ENCODE measurements at regions of chr10 and their contacts with region 1.

Region 1: DNA sequence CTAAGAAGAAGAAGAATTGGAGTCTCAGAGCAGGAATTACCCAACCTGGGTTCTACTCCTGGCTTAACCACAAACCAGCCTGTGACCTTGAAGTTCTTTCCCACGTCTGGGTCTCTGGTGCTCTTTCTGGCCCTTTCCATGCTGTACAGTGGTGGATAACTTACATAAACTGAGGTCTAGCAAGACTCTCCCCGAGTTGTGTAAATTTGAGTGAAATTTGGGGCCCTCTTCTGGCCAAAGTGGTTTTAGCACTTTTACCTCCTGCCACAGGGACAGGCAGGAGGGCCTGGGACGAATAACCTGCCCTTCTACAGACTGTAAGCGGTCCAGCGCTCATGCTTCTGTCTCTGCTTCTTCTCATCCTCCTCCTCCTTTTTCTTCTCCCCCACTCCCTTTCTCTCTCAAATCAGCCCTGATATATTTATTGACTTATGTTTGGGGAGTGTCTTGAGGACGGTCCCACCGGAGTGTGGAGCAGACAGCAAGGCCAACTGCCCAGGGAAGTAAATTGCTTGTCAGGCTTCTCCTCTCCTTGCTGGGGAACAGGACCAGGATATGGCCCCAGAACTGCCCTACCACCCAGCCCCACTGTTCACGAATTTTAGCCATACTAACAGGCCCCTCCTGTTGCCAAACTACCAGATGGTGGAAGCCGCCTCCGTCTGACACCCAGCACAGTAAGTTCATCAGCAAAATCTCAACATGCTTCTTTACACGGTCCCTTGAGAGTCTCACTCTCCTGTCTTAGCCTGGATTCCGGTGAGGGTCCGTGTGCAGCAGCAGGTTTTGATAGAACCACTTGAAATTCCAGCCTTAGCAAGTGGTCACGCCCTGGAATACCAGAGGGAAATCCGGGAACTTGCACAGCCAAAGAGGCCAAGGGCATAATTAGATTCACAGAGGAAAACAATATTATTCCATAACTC is 4.0 kb upstream of the SH3PXD2A start:
- DNase-seq: peak in 4 of 5 donors; percentile 56 to 79 (median 62)
- H3K4me3 ChIP-seq: no peak overlapping the region
- H3K27ac ChIP-seq: no peak overlapping the region
- H3K4me1 ChIP-seq: no peaks in the 10 kb centered on the region
- H3K27me3 ChIP-seq: no peaks in the 10 kb centered on the region
- CTCF ChIP-seq: peak; percentile 57 to 78 (median 77)
- EP300 ChIP-seq: no peak
- POLR2A ChIP-seq: peak; percentile 14

Region 2: GRCh38 chr10:103712570-103713498 is 146.6 kb before region 1 on chr10:
- intact Hi-C with region 1: loop called (anchors 2 kb)
- DNase-seq: peak; percentile 74 to 91 (median 87)
- H3K4me3 ChIP-seq: no peak overlapping the region
- H3K27ac ChIP-seq: no peak overlapping the region
- H3K4me1 ChIP-seq: peaks cover 1% of the 10 kb centered on the region
- H3K27me3 ChIP-seq: no peaks in the 10 kb centered on the region
- CTCF ChIP-seq: peak; percentile 66 to 97 (median 95)
- EP300 ChIP-seq: no peak
- POLR2A ChIP-seq: no peak

Region 3: DNA sequence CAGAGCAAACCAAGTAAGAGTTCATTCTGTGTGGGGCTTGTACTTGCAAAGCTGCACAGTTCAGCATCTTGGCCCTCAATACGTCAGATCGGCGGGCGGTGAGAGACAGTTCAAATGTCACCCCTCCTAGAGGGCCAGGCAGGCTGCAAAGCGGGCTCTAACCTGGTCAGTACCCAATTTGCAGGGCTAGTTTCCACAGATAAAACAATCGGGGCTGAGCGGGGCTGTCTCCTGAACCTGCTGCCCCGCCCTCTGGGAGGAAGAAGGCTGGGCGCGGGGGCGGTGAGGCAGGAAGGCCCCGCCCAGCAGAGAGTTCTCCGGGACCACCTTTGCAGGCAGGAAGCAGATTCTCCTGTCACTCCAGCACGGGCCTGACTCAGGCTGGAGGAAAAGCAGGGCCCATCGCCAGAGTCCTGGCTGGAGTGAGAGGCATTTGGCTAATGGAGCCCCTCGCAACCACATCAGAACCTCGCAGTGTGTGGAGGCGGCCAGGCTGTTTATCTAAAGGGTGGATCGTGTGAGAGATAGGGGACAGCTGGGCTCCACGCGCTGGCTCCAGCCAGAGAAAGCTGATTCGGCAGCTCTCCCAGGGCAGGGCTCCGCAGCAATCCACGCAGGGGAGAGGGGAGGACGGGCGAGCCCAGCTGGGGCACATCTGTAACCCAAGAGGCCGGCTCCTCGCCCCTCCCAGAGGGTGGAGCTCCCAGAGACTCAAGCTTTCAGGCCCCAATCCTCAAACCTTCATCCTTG is 87.2 kb before region 1 on chr10:
- intact Hi-C with region 1: loop called in 1 of 4 experiments (anchors 10 kb)
- DNase-seq: peak; percentile 81 to 88 (median 85)
- H3K4me3 ChIP-seq: peak overlapping the region; percentile 18
- H3K27ac ChIP-seq: peak overlapping the region in 1 of 2 donors; percentile 68
- H3K4me1 ChIP-seq: peaks cover 4% of the 10 kb centered on the region
- H3K27me3 ChIP-seq: no peaks in the 10 kb centered on the region
- CTCF ChIP-seq: no peak
- EP300 ChIP-seq: no peak
- POLR2A ChIP-seq: no peak

Region 4: DNA sequence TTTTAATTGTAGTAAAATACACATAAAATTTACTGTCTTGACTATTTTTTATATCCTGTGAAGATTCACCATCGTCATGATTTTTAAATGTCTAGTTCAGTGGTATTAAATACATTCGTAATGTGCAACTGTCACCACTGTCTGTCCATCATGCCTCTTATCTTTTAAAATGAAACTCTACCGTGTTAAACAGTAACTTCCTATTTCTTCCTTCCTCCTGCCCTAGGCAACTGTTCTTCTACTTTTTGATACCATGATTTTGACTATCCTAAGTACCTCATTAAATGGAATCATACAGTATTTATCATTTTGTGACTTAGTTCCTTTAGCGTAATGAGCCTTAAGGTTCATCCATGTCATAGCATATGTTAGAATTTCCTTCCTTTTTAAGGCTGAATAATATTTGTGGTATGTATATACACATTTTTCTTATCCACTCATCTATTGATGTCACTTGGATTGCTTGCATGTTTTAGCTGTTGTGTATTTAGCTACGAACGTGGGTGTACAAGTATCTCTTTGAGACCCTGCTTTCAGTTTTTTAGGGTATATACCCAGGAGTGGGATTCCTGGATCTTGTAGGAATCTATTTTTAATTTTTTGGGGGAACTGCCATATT is 121.0 kb after region 1 on chr10:
- intact Hi-C with region 1: no loop called
- DNase-seq: no peak
- H3K4me3 ChIP-seq: no peak overlapping the region
- H3K27ac ChIP-seq: no peak overlapping the region
- H3K4me1 ChIP-seq: peaks cover 5% of the 10 kb centered on the region
- H3K27me3 ChIP-seq: no peaks in the 10 kb centered on the region
- CTCF ChIP-seq: no peak
- EP300 ChIP-seq: no peak
- POLR2A ChIP-seq: no peak

Measured in ovary (tissue), 10 donors.